ENCODE measurements at regions of chr1 and their contacts with region 1.

Region 1: DNA sequence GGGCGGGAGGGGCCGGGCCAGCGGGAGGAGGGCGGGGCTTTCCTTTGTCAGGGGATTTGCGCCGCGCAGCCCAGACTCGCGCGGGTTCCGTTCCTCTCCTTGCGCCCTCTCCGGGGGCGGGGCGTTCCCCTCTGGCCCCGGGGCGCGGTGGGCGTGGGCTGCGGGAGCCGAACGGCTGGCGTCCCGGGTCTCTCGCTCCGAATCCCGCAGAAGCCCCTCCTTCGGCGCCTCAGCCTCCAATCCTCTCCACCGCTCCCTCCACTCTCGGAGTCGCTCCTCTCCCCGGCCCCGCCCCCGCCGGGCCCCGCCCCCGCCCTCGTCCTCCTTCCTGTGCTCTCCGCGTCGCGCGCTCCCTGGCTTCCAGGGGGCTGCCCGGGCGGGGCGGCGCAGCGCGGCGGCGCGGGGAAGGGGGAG is 82.8 kb upstream of the BMP8A start:
- DNase-seq: peak; percentile 63 to 89 (median 75)
- ATAC-seq: peak; percentile 84 to 90 (median 87)
- H3K4me3 ChIP-seq: peak overlapping the region; percentile 51 to 62
- H3K4me3 Mint-ChIP-seq: peak overlapping the region; percentile 85 to 89 (median 87)
- H3K27ac ChIP-seq: no peak overlapping the region
- H3K27ac Mint-ChIP-seq: no peak overlapping the region
- H3K4me1 ChIP-seq: peaks cover 0 to 29% of the 10 kb centered on the region in 2 experiments
- H3K4me1 Mint-ChIP-seq: peaks cover 60 to 68% (median 65%) of the 10 kb centered on the region in 3 donors
- H3K27me3 ChIP-seq: no peaks in the 10 kb centered on the region
- H3K27me3 Mint-ChIP-seq: no peaks in the 10 kb centered on the region

Region 2: GRCh38 chr1:38370716-38371504 is 1037.7 kb before region 1 on chr1:
- CTCF ChIA-PET with region 1: no interaction called
- POLR2A ChIA-PET with region 1: no interaction called
- DNase-seq: no peak
- ATAC-seq: no peak
- H3K4me3 ChIP-seq: no peak overlapping the region
- H3K4me3 Mint-ChIP-seq: no peak overlapping the region
- H3K27ac ChIP-seq: no peak overlapping the region
- H3K27ac Mint-ChIP-seq: no peak overlapping the region
- H3K4me1 ChIP-seq: no peaks in the 10 kb centered on the region
- H3K4me1 Mint-ChIP-seq: no peaks in the 10 kb centered on the region
- H3K27me3 ChIP-seq: peaks cover 0 to 7% of the 10 kb centered on the region in 2 experiments
- H3K27me3 Mint-ChIP-seq: peaks cover 13 to 35% of the 10 kb centered on the region in 2 donors

Region 3: DNA sequence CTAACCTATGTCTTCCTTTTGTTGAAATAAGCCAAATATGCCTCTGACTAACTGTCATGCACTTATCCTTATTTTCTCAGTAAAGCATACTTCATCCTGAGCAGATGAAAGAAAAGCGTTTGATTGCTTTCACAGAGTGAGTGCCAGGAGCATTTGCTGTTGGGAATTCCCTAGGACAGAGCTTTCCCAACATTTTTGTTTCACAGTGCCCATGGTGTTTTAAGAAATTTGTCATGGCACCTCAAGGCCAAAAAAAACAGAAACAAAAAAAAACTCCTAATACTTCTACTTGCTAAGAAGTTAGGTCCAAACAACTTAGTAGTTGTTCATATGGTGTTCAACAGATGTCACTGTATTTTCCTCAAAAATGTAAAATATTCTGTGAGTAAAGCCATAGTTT is 38.0 kb before region 1 on chr1:
- CTCF ChIA-PET with region 1: interaction called in 1 of 2 experiments, 3 read pairs
- POLR2A ChIA-PET with region 1: interaction called in 1 of 2 experiments, 12 read pairs
- DNase-seq: no peak
- ATAC-seq: no peak
- H3K4me3 ChIP-seq: no peak overlapping the region
- H3K4me3 Mint-ChIP-seq: no peak overlapping the region
- H3K27ac ChIP-seq: no peak overlapping the region
- H3K27ac Mint-ChIP-seq: no peak overlapping the region
- H3K4me1 ChIP-seq: no peaks in the 10 kb centered on the region
- H3K4me1 Mint-ChIP-seq: no peaks in the 10 kb centered on the region
- H3K27me3 ChIP-seq: no peaks in the 10 kb centered on the region
- H3K27me3 Mint-ChIP-seq: no peaks in the 10 kb centered on the region

Region 4: GRCh38 chr1:39391691-39392679 is 16.7 kb before region 1 on chr1:
- CTCF ChIA-PET with region 1: interaction called in 1 of 2 experiments, 14 read pairs
- POLR2A ChIA-PET with region 1: no interaction called
- DNase-seq: no peak
- ATAC-seq: no peak
- H3K4me3 ChIP-seq: no peak overlapping the region
- H3K4me3 Mint-ChIP-seq: no peak overlapping the region
- H3K27ac ChIP-seq: no peak overlapping the region
- H3K27ac Mint-ChIP-seq: peak overlapping the region; percentile 58 to 66
- H3K4me1 ChIP-seq: peaks cover 2 to 18% of the 10 kb centered on the region in 2 experiments
- H3K4me1 Mint-ChIP-seq: peaks cover 58 to 71% (median 61%) of the 10 kb centered on the region in 3 donors
- H3K27me3 ChIP-seq: no peaks in the 10 kb centered on the region
- H3K27me3 Mint-ChIP-seq: no peaks in the 10 kb centered on the region

Region 5: DNA sequence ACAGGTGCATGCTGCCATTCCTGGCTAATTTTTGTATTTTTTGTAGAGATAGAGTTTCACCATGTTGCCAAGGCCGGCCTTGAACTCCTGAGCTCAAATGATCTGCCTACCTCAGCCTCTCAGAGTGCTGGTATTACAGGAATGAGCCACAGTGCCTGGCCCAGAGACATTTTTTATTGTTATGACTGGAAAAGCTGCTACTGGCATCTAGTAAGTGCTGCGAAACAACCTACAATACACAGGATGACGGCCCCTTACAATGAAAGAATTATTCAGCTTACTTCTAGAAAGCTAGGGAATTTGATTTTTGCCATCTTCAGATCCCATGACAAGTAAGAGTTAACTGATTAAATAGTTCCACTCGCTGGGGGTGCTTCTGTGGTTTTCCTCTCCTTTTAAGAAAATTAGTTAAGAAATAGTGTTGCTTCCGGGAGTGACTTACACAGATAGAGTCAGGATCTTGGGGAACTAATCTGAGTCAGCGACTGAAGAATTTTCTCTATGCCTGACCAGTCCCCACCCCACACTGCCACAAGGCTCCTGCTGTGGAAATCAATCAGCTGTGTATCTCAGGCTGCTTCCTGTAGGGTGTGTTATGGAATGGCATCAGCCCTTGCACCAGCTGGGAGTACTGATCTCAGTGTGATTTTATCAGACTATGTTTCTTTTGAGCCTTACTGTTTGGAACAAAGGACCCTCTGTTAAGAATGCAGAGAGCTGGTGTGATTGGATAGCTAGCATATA is 10.2 kb before region 1 on chr1:
- CTCF ChIA-PET with region 1: interaction called, 3 to 23 read pairs
- POLR2A ChIA-PET with region 1: interaction called in 1 of 2 experiments, 4 read pairs
- DNase-seq: peak in 3 of 35 experiments; percentile 10 to 15 (median 13)
- ATAC-seq: peak; percentile 10 to 52 (median 44)
- H3K4me3 ChIP-seq: peak overlapping the region in 1 of 2 donors; percentile 10
- H3K4me3 Mint-ChIP-seq: peak overlapping the region in 2 of 3 donors; percentile 9 to 58
- H3K27ac ChIP-seq: no peak overlapping the region
- H3K27ac Mint-ChIP-seq: peak overlapping the region; percentile 69 to 79
- H3K4me1 ChIP-seq: peaks cover 9 to 24% of the 10 kb centered on the region in 2 experiments
- H3K4me1 Mint-ChIP-seq: peaks cover 65 to 70% (median 70%) of the 10 kb centered on the region in 3 donors
- H3K27me3 ChIP-seq: no peaks in the 10 kb centered on the region
- H3K27me3 Mint-ChIP-seq: no peaks in the 10 kb centered on the region